Activated naive CD4-positive, alpha-beta T cell treated with anti-CD3 and anti-CD28 coated beads, Interleukin-2, amount 10 ng/mL, durations not matched to agents 7 days and 5 days (primary cell): ENCODE measurements at regions of chr6 and their contacts with region 1.

Region 1: DNA sequence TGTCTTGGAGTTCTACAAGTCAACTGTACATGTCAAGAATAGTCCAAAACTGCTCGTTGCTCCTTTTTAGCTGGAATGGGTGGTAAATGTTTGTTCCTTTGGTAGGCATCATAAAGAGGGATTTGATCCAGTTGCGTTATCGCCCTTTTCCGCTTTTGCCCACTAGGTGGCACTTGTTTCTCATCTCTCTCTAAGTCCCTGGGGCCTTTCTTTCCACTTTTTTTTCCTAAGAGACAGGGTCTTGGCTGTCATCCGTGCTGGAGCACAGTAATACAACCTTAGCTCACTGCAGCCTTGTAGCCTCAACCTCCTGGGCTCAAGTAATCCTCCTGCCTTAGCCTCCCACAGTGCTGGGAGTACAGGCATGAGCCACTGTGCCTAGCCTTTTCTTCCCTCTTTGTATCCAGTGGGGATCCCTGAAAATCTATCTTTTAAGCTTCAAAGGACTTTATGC is 20.7 kb downstream of the GTPBP2 start:
- DNase-seq: peak; percentile 76
- H3K4me3 Mint-ChIP-seq: no peak overlapping the region
- H3K27ac Mint-ChIP-seq: peak overlapping the region; percentile 6
- H3K4me1 Mint-ChIP-seq: peaks cover 5% of the 10 kb centered on the region
- H3K27me3 Mint-ChIP-seq: no peaks in the 10 kb centered on the region

Region 2: GRCh38 chr6:43159599-43159998 is 448.7 kb before region 1 on chr6:
- CTCF ChIA-PET with region 1: no interaction called
- DNase-seq: no peak
- H3K4me3 Mint-ChIP-seq: no peak overlapping the region
- H3K27ac Mint-ChIP-seq: no peak overlapping the region
- H3K4me1 Mint-ChIP-seq: no peaks in the 10 kb centered on the region
- H3K27me3 Mint-ChIP-seq: peaks cover 19% of the 10 kb centered on the region

Region 3: DNA sequence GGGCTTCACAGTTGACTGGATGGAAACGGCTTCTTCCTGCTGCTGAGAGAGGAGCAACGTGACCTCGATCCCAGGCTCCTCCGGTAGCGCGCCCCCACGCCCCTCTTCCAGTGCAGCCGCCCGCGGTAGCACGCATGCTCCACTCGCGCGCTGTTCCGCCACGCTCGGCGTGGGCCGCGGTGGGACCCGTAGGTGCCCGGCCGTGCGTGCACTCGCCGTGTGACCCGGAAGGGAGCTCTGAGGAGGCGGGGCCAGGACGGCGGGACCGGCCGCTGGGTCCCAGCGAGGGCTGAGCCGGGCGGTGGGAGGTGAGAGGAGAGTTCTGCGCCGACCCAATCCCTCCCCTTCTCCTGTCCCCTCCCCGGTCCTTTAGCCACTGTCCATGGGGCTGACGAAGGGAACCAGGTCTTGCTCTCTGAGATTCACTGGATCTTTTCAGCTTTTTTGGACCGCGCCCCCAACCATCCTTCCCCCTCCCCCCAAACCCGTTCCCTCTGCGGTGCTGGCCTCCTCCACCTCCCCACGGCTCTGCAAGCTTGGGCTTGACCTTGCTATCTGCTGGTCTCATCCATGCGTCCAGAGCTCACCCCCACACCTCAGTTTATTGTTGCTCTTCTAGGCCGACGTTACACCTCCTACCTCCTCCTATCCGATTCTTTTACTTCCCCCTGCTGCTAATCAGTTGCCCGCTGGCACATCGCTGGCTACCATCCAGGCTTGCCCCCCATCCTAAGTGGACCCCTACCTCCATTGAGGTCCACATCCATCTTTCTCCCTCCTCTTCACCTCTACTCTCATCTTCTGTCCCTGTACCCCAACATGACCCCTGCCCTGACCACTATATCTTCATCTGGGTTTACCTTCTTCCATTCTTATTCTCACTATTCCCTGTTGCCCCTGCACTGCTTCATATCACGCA is 426.1 kb before region 1 on chr6 and contains the start of gene CUL9:
- CTCF ChIA-PET with region 1: no interaction called
- DNase-seq: peak; percentile 91
- H3K4me3 Mint-ChIP-seq: peak within 1 kb of the TSS; percentile 97
- H3K27ac Mint-ChIP-seq: peak within 1 kb of the TSS; percentile 70
- H3K4me1 Mint-ChIP-seq: peaks cover 51% of the 10 kb centered on the region
- H3K27me3 Mint-ChIP-seq: no peaks in the 10 kb centered on the region

Region 4: GRCh38 chr6:43620801-43621428 is 12.6 kb after region 1 on chr6:
- CTCF ChIA-PET with region 1: interaction called, 23 read pairs
- DNase-seq: no peak
- H3K4me3 Mint-ChIP-seq: no peak overlapping the region
- H3K27ac Mint-ChIP-seq: peak overlapping the region; percentile 74
- H3K4me1 Mint-ChIP-seq: peaks cover 3% of the 10 kb centered on the region
- H3K27me3 Mint-ChIP-seq: no peaks in the 10 kb centered on the region